ENCODE measurements at regions of chrX and their contacts with region 1.

Region 1: GRCh38 chrX:47193475-47194193 is at the start of gene UBA1:
- DNase-seq: peak; percentile 97
- ATAC-seq: peak; percentile 84
- H3K4me3 ChIP-seq: peak within 1 kb of the TSS; percentile 91
- H3K27ac ChIP-seq: peak within 1 kb of the TSS; percentile 89
- H3K4me1 ChIP-seq: peaks cover 13% of the 10 kb centered on the region
- H3K27me3 ChIP-seq: no peaks in the 10 kb centered on the region
- CTCF ChIP-seq: peak; percentile 68 to 90 (median 79); a peak in 5 of 6 replicates
- EP300 ChIP-seq: 0 out of 4 replicates have a peak, but pooled peaks of 1 of the 2 experiments have one; percentile 29
- POLR2A ChIP-seq: peak; percentile 98
- RAD21 ChIP-seq: peak; percentile 92
- polyA plus RNA-seq, gene UBA1: 60.4 to 79.9 TPM

Region 2: GRCh38 chrX:47144626-47145394 is 48.8 kb before region 1 on chrX and contains the starts of genes NDUFB11 and RBM10:
- CTCF ChIA-PET with region 1: interaction called, 8 read pairs
- POLR2A ChIA-PET with region 1: interaction called, 20 read pairs
- RAD21 ChIA-PET with region 1: interaction called, 14 read pairs
- SMC1A ChIA-PET with region 1: interaction called, 8 read pairs
- in situ Hi-C with region 1: no loop called
- intact Hi-C with region 1: loop called (anchors 2 kb)
- DNase-seq: peak; percentile 76
- ATAC-seq: peak; percentile 96
- H3K4me3 ChIP-seq: peak within 1 kb of the TSS; percentile 80
- H3K27ac ChIP-seq: peak within 1 kb of the TSS; percentile 87
- H3K4me1 ChIP-seq: peaks cover 6% of the 10 kb centered on the region; the same call in 1 of the 2 replicates
- H3K27me3 ChIP-seq: no peaks in the 10 kb centered on the region
- CTCF ChIP-seq: peak; percentile 50 to 64 (median 54)
- EP300 ChIP-seq: no peak
- POLR2A ChIP-seq: peak; percentile 96
- RAD21 ChIP-seq: no peak
- polyA plus RNA-seq, gene NDUFB11: 16.1 to 44.5 TPM
- polyA plus RNA-seq, gene RBM10: 1.4 to 4.4 TPM

Region 3: DNA sequence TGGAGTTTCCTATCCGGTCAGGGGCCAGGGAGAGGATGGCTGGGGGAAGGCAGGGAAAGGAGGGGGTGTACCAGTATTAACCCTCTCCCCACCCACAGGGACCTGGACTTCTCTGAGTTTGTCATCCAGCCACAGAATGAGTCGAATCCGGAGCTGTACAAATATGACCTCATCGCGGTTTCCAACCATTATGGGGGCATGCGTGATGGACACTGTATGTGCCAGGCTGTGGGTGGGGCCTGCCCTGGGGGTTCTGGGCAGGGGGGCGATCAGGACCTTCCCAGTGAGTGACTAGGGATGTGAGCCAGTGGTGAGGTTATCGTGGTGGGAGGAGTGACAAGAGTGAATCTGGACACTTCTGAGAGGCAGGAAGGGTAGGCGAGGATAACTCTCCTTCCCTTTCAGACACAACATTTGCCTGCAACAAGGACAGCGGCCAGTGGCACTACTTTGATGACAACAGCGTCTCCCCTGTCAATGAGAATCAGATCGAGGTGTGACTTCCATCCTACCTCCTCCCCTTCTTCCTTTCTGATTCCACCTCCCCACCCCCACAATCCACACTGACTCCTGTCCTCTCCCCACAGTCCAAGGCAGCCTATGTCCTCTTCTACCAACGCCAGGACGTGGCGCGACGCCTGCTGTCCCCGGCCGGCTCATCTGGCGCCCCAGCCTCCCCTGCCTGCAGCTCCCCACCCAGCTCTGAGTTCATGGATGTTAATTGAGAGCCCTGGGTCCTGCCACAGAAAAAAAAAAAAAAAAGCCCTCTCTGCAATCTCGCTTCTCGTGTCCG is 53.8 kb after region 1 on chrX:
- CTCF ChIA-PET with region 1: no interaction called
- POLR2A ChIA-PET with region 1: no interaction called
- RAD21 ChIA-PET with region 1: no interaction called
- SMC1A ChIA-PET with region 1: no interaction called
- in situ Hi-C with region 1: no loop called
- intact Hi-C with region 1: no loop called
- DNase-seq: no peak
- ATAC-seq: no peak; the same call in none of the 3 replicates
- H3K4me3 ChIP-seq: no peak overlapping the region
- H3K27ac ChIP-seq: no peak overlapping the region
- H3K4me1 ChIP-seq: no peaks in the 10 kb centered on the region
- H3K27me3 ChIP-seq: no peaks in the 10 kb centered on the region
- CTCF ChIP-seq: no peak
- EP300 ChIP-seq: no peak
- POLR2A ChIP-seq: no peak
- RAD21 ChIP-seq: no peak

Region 4: DNA sequence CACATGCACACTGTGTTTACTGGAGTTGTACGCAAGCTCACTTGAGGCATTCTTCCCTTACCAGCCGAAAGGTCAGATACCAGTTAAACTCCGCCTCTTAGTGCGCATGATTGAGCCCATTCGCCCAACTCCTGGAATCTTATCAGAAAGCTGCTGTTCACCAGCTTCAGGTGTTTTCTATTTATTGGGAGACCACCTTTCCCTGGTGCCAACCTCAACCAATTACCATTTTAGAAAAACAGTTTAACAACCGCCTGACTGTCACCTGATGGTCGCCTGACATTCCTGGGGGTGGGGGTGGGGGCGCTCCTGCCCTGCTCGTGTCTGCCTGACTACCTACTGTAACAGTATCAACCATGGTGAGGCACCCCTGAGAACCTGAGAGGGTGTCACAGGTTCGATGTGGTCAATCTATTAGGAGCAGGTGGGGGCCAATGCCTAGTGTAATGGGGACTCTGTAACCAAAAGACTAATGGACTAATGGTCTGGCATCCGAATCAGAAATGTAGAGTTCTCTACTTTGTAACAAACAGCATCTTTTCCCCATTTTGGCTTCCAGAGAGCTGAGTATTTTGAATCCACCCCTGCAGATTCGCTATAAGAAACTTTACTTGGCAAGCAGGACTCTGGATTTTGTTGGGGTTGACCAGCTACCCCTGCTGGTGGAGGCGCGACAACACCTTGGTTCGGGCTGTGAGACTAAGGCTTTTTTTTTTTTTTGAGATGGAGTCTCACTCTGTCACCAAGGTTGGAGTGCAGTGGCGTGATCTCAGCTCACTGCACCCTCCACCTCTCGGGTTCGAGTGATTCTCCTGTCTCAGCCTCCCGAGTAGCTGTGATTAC is 118.5 kb after region 1 on chrX:
- CTCF ChIA-PET with region 1: interaction called, 3 read pairs
- POLR2A ChIA-PET with region 1: no interaction called
- RAD21 ChIA-PET with region 1: no interaction called
- SMC1A ChIA-PET with region 1: no interaction called
- in situ Hi-C with region 1: no loop called
- intact Hi-C with region 1: loop called (anchors 1 kb)
- DNase-seq: no peak
- ATAC-seq: peak; percentile 87
- H3K4me3 ChIP-seq: no peak overlapping the region
- H3K27ac ChIP-seq: no peak overlapping the region
- H3K4me1 ChIP-seq: no peaks in the 10 kb centered on the region
- H3K27me3 ChIP-seq: no peaks in the 10 kb centered on the region; a peak in 1 of 4 replicates
- CTCF ChIP-seq: peak; percentile 45 to 56 (median 48); a peak in 5 of 6 replicates
- EP300 ChIP-seq: no peak
- POLR2A ChIP-seq: no peak
- RAD21 ChIP-seq: peak; percentile 58

Region 5: DNA sequence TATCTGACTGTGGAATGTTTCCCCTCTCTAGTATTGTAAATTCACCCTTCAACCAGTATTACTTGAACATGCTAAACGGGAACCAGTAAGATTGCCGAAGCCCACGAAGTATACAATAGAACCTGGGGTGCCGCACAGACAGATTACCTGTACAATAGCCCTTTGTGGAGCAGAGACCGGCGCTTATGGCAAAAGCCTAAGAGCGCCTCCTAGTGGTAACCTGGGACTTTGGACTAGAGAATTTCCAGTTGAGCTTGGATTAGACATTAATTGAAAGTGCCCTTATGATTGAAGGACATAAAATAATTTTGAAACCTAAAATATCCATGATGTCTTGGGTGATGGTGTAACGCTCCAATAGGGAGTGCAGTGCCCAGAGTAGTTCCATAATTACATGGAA is 190.9 kb after region 1 on chrX:
- CTCF ChIA-PET with region 1: interaction called, 16 read pairs
- POLR2A ChIA-PET with region 1: interaction called, 4 read pairs
- RAD21 ChIA-PET with region 1: interaction called, 7 read pairs
- SMC1A ChIA-PET with region 1: interaction called, 20 read pairs
- in situ Hi-C with region 1: loop called (anchors 5 kb)
- intact Hi-C with region 1: loop called (anchors 1 kb)
- DNase-seq: peak; percentile 21
- ATAC-seq: peak; percentile 92
- H3K4me3 ChIP-seq: no peak overlapping the region
- H3K27ac ChIP-seq: no peak overlapping the region
- H3K4me1 ChIP-seq: no peaks in the 10 kb centered on the region
- H3K27me3 ChIP-seq: no peaks in the 10 kb centered on the region
- CTCF ChIP-seq: peak; percentile 74 to 82 (median 78)
- EP300 ChIP-seq: no peak
- POLR2A ChIP-seq: no peak
- RAD21 ChIP-seq: peak; percentile 88

Region 6: DNA sequence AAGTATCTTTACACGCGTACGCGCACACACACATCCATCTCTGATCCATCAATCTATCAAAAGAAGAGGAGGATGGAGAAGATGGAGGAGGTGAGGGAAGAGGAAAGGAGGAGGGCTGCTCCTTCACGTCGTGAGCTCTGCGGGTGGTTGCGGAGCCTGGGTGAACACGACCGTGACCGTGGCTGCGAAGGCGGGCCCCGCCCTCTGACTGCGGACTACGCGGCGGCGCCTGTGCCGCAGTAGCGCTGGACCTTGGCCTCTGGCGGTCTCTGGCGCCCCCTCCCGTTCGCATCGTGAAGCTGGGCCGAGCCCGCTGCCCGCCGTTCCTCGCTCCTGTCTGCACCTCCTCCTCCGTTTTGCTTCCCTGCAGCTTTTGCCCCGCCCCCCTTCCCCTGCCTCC is 329.7 kb after region 1 on chrX:
- CTCF ChIA-PET with region 1: interaction called, 4 read pairs
- POLR2A ChIA-PET with region 1: interaction called, 4 read pairs
- RAD21 ChIA-PET with region 1: interaction called, 8 read pairs
- SMC1A ChIA-PET with region 1: no interaction called
- in situ Hi-C with region 1: loop called (anchors 5 kb)
- intact Hi-C with region 1: no loop called
- DNase-seq: no peak
- ATAC-seq: peak; percentile 99
- H3K4me3 ChIP-seq: peak overlapping the region; percentile 50
- H3K27ac ChIP-seq: peak overlapping the region; percentile 10; the same call in 1 of the 2 replicates
- H3K4me1 ChIP-seq: no peaks in the 10 kb centered on the region
- H3K27me3 ChIP-seq: no peaks in the 10 kb centered on the region
- CTCF ChIP-seq: peak; percentile 54 to 85 (median 81); a peak in 5 of 6 replicates
- EP300 ChIP-seq: no peak
- POLR2A ChIP-seq: no peak
- RAD21 ChIP-seq: peak; percentile 72

Region 7: DNA sequence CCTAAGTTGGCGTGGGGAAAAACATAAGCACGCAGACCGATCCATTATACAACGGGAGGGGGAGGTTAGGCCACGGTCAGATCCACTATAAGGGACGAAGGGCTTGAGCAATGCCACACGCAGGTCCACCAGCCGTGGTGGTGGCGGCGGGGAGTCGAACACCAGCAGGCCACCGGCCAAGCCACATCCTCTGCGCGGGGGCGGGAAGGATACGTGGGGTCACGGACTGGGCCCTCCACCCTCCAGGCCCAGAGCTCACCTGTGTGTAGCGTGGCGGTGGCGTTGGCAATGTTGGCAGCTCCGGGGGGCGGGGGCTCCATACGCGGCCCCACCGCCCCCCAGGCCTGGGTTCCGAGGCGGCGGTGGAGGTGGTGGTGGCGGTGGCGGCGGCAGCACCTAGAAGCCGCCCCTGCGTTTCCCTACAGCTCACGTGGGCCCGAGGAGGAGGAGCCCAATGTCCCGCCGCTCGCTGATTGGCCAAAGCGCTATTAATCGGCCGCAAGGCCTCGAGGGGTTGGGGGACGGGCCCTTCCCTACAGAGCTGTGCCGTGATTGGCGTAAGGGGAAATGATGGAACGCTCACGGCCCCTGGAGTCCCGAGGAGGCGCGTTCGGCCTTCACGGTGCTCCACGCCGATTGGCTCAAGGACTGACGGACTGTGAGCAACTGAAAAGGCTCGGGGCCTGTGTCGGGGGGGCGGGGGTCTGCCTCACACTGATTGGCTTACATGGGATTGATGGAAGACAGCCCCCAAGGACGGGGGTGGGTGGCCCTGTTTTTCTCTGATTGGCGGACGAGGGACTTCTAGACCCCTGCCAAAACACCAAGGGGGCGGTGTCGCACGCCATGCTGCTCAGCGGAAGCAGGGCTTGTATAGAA is 456.8 kb after region 1 on chrX and contains the start of gene ELK1:
- CTCF ChIA-PET with region 1: no interaction called
- POLR2A ChIA-PET with region 1: no interaction called
- RAD21 ChIA-PET with region 1: no interaction called
- SMC1A ChIA-PET with region 1: no interaction called
- in situ Hi-C with region 1: loop called (anchors 10 kb)
- intact Hi-C with region 1: loop called (anchors 2 kb)
- DNase-seq: peak; percentile 90
- ATAC-seq: peak; percentile 94
- H3K4me3 ChIP-seq: peak within 1 kb of the TSS; percentile 75
- H3K27ac ChIP-seq: peak within 1 kb of the TSS; percentile 76
- H3K4me1 ChIP-seq: peaks cover 2% of the 10 kb centered on the region; the same call in 1 of the 2 replicates
- H3K27me3 ChIP-seq: no peaks in the 10 kb centered on the region
- CTCF ChIP-seq: no peak
- EP300 ChIP-seq: no peak
- POLR2A ChIP-seq: peak; percentile 87
- RAD21 ChIP-seq: no peak
- polyA plus RNA-seq, gene ELK1: 4.1 to 6.3 TPM

Region 8: GRCh38 chrX:48945516-48946348 is 1752.1 kb after region 1 on chrX:
- CTCF ChIA-PET with region 1: no interaction called
- POLR2A ChIA-PET with region 1: no interaction called
- RAD21 ChIA-PET with region 1: no interaction called
- SMC1A ChIA-PET with region 1: no interaction called
- in situ Hi-C with region 1: no loop called
- intact Hi-C with region 1: loop called (anchors 5 kb)
- DNase-seq: no peak
- ATAC-seq: peak; percentile 82
- H3K4me3 ChIP-seq: no peak overlapping the region
- H3K27ac ChIP-seq: no peak overlapping the region
- H3K4me1 ChIP-seq: peaks cover 13% of the 10 kb centered on the region
- H3K27me3 ChIP-seq: no peaks in the 10 kb centered on the region
- CTCF ChIP-seq: peak; percentile 88 to 93 (median 91)
- EP300 ChIP-seq: no peak
- POLR2A ChIP-seq: no peak
- RAD21 ChIP-seq: peak; percentile 94

Measured in GM12878 (cell line).